ENCODE measurements at regions of chr14 and their contacts with region 1.

Region 1: DNA sequence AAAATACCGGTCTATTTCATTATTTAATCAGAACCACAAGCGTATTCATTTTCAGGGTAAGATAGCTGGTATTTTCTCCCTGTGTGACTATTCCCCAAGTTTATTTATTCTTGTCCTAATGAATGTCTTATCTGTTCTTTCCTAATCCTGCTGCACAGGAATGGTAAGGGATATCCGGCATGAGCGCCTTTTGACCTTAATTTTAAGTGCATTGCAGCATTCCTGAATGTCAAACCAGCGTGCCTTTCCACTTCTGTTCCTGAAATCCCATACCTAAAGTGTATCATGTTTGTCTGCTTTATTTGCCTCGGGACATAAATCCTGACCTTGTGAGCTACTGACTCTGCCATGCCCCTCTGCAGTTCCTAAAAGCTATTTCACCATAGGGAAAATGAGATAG is 1713.2 kb upstream of the FLRT2 start:
- DNase-seq: no peak
- H3K4me3 ChIP-seq: no peak overlapping the region
- H3K27ac ChIP-seq: no peak overlapping the region
- H3K4me1 ChIP-seq: no peaks in the 10 kb centered on the region
- H3K27me3 ChIP-seq: no peaks in the 10 kb centered on the region
- CTCF ChIP-seq: no peak
- POLR2A ChIP-seq: no peak

Region 2: GRCh38 chr14:81971911-81972310 is 1844.9 kb before region 1 on chr14:
- intact Hi-C with region 1: loop called (anchors 10 kb)
- DNase-seq: no peak
- H3K4me3 ChIP-seq: no peak overlapping the region
- H3K27ac ChIP-seq: no peak overlapping the region
- H3K4me1 ChIP-seq: no peaks in the 10 kb centered on the region
- H3K27me3 ChIP-seq: no peaks in the 10 kb centered on the region
- CTCF ChIP-seq: no peak
- POLR2A ChIP-seq: no peak

Region 3: GRCh38 chr14:83799233-83799632 is 17.5 kb before region 1 on chr14:
- intact Hi-C with region 1: no loop called
- DNase-seq: no peak
- H3K4me3 ChIP-seq: no peak overlapping the region
- H3K27ac ChIP-seq: no peak overlapping the region
- H3K4me1 ChIP-seq: no peaks in the 10 kb centered on the region
- H3K27me3 ChIP-seq: no peaks in the 10 kb centered on the region
- CTCF ChIP-seq: no peak
- POLR2A ChIP-seq: no peak

Region 4: GRCh38 chr14:83838221-83838620 is 21.5 kb after region 1 on chr14:
- intact Hi-C with region 1: no loop called
- DNase-seq: no peak
- H3K4me3 ChIP-seq: no peak overlapping the region
- H3K27ac ChIP-seq: no peak overlapping the region
- H3K4me1 ChIP-seq: no peaks in the 10 kb centered on the region
- H3K27me3 ChIP-seq: no peaks in the 10 kb centered on the region
- CTCF ChIP-seq: no peak
- POLR2A ChIP-seq: no peak

Region 5: DNA sequence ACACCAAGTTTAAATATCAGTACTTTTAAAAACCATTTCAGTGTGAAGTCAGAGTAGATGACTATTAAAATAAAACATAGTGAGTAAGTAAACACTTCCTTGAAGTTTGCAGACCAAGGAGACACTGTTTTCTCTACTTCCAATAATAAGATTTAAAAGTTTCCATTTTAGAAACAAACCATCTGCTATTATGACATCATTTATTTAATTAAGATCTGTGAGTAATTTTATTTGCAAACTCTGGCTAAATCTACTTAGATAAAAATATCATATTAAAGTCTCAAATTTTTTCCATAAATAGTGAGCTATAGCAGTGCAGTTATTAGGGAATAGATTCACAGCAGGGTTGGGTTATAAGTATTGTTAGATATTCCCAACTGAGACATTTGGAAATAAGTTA is 446.2 kb after region 1 on chr14:
- intact Hi-C with region 1: no loop called
- DNase-seq: no peak
- H3K4me3 ChIP-seq: no peak overlapping the region
- H3K27ac ChIP-seq: no peak overlapping the region
- H3K4me1 ChIP-seq: no peaks in the 10 kb centered on the region
- H3K27me3 ChIP-seq: no peaks in the 10 kb centered on the region
- CTCF ChIP-seq: no peak
- POLR2A ChIP-seq: no peak

Measured in breast epithelium (tissue), 4 donors.